A673 (cell line): ENCODE measurements at regions of chr11 and their contacts with region 1.

Region 1: DNA sequence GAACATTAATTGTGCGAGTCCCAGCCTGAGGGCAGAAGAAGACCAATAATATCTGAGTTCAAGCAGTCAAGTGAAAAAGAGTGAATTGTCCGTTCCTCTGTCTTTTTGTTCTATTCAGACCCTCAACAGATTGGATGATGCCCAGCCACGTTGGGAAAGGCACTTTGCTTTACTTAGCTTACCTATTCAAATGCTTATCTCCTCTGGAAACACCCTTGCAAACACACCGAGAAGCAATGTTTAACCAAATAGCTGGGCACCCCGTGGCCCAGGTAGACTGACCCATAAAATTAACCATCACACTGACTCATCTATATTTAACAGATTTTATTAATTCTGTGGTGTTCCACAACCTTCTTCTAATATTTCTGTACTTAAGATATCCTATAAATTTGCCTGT is 9.3 kb downstream of the OOSP4A start:
- DNase-seq: no peak
- H3K4me3 ChIP-seq: no peak overlapping the region
- H3K27ac ChIP-seq: no peak overlapping the region
- H3K4me1 ChIP-seq: no peaks in the 10 kb centered on the region
- H3K27me3 ChIP-seq: peaks cover 26% of the 10 kb centered on the region
- CTCF ChIP-seq: no peak

Region 2: GRCh38 chr11:60029015-60029632 is 56.0 kb after region 1 on chr11:
- CTCF ChIA-PET with region 1: no interaction called
- POLR2A ChIA-PET with region 1: no interaction called
- intact Hi-C with region 1: loop called (anchors 10 kb)
- DNase-seq: no peak
- H3K4me3 ChIP-seq: no peak overlapping the region
- H3K27ac ChIP-seq: no peak overlapping the region
- H3K4me1 ChIP-seq: no peaks in the 10 kb centered on the region
- H3K27me3 ChIP-seq: peaks cover 56% of the 10 kb centered on the region
- CTCF ChIP-seq: no peak